Right cardiac atrium (tissue), 5 donors: ENCODE measurements at regions of chr6 and their contacts with region 1.

Region 1: GRCh38 chr6:100099189-100100074 is 105.4 kb upstream of the MCHR2 start:
- DNase-seq: no peak
- ATAC-seq: no peak
- H3K4me3 ChIP-seq: no peak overlapping the region
- H3K27ac ChIP-seq: no peak overlapping the region
- H3K4me1 ChIP-seq: no peaks in the 10 kb centered on the region
- H3K27me3 ChIP-seq: no peaks in the 10 kb centered on the region

Region 2: GRCh38 chr6:99868074-99868702 is 231.2 kb before region 1 on chr6:
- intact Hi-C with region 1: loop called in 2 of 4 experiments (anchors 5 to 10 kb)
- DNase-seq: peak; percentile 72 to 89 (median 85)
- ATAC-seq: peak; percentile 41 to 70
- H3K4me3 ChIP-seq: no peak overlapping the region
- H3K27ac ChIP-seq: no peak overlapping the region
- H3K4me1 ChIP-seq: no peaks in the 10 kb centered on the region
- H3K27me3 ChIP-seq: no peaks in the 10 kb centered on the region

Region 3: DNA sequence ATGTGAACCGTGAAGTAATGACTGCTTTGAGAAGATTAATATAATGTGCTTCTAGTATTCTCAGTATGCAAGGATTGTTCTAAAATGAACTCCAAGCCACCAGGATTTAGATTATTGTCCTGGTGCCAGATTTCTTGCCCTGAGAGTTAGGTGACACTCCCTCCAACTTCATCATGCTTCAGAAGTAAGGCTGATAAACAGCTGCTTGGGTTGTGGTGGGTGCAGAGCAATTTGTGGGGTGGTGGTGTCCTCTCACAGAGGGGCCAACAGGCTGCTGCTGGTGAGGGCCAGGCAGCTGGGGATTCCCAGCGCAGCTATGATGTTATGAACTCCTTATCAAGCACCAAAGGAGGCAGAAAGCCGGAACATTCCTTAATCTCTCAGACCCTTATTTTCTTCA is 220.0 kb before region 1 on chr6:
- intact Hi-C with region 1: loop called in 1 of 4 experiments (anchors 10 kb)
- DNase-seq: no peak
- ATAC-seq: no peak
- H3K4me3 ChIP-seq: no peak overlapping the region
- H3K27ac ChIP-seq: no peak overlapping the region
- H3K4me1 ChIP-seq: no peaks in the 10 kb centered on the region
- H3K27me3 ChIP-seq: no peaks in the 10 kb centered on the region

Region 4: GRCh38 chr6:100050550-100050949 is 48.9 kb before region 1 on chr6:
- intact Hi-C with region 1: no loop called
- DNase-seq: no peak
- ATAC-seq: no peak
- H3K4me3 ChIP-seq: no peak overlapping the region
- H3K27ac ChIP-seq: no peak overlapping the region
- H3K4me1 ChIP-seq: no peaks in the 10 kb centered on the region
- H3K27me3 ChIP-seq: no peaks in the 10 kb centered on the region

Region 5: GRCh38 chr6:100065348-100065747 is 34.1 kb before region 1 on chr6:
- intact Hi-C with region 1: no loop called
- DNase-seq: no peak
- ATAC-seq: no peak
- H3K4me3 ChIP-seq: no peak overlapping the region
- H3K27ac ChIP-seq: no peak overlapping the region
- H3K4me1 ChIP-seq: no peaks in the 10 kb centered on the region
- H3K27me3 ChIP-seq: no peaks in the 10 kb centered on the region